IMR-90 (cell line): ENCODE measurements at regions of chr2 and their contacts with region 1.

Region 1: DNA sequence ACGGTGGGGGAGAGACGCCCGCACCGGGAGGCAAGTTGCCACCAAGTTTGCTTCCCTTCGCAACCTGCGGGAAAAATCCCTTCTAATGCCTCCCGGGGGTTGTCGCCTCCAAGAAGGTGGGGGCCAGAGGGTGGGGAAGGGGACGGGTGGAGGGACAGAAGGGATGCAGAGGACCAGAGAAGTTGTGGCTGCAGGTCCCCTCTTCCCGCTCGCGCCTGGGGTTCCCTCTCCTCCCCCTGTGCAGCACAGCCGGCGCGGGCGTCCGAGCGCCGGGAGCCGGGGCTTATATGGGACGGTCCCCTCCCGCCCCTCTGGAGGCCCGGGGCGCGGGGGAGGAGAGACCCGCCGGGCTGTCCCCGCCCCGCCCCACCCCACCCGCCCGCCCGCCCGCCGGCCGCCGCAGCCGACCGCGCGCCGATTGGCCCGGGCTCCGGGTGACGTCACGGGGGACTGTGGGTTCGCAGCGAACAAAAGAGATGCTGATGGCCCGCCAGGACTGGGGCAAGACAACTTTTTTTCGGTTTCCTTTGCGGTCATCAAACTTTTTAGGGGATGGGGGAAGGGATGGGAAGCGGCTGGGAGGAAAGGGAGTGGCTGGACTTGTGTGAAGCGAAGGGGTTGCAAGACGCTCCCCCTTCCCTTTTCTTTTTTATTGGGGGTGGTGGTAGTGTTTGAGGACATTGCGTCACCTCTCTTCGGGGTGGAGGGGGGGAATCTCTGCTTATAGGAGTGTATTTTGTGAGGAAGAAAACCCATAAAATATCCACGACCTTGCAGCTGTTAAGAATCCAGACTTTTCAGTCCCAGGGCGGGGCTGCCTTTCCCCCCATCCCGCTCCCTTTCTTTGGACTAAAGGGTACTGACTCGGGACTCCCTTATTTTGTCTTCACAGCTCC is at the start of gene FN1:
- DNase-seq: peak; percentile 98
- ATAC-seq: peak; percentile 82
- H3K4me3 ChIP-seq: peak within 1 kb of the TSS; percentile 65
- H3K27ac ChIP-seq: peak within 1 kb of the TSS; percentile 94
- H3K4me1 ChIP-seq: peaks cover 8% of the 10 kb centered on the region
- H3K27me3 ChIP-seq: no peaks in the 10 kb centered on the region
- CTCF ChIP-seq: no peak
- POLR2A ChIP-seq: peak; percentile 99
- RAD21 ChIP-seq: peak; percentile 11
- total RNA-seq, gene FN1: 7,693 and 8,243 TPM in 2 replicates

Region 2: DNA sequence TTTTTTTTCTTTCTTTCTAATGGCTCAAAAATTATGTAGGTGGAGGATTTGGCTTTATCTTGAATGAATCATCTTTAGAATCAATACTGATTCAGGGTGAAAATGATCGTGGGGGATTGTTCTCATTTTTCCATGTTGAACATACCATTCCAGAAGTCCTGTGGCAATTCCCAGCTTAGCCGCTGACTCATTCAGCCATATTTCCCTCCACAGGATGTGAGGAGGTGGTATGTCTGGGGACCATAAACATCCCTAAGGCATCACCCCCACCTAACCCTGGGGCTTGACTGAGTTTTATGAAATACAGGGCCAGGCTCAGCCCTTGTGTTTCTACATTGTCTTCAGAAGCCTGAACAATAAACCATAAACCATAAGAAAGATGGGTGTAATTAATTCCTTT is 92.5 kb after region 1 on chr2:
- CTCF ChIA-PET with region 1: no interaction called
- POLR2A ChIA-PET with region 1: interaction called, 3 read pairs
- dilution Hi-C with region 1: no loop called
- in situ Hi-C with region 1: no loop called
- intact Hi-C with region 1: loop called (anchors 1 kb)
- DNase-seq: peak; percentile 99
- ATAC-seq: peak; percentile 70
- H3K4me3 ChIP-seq: no peak overlapping the region
- H3K27ac ChIP-seq: peak overlapping the region; percentile 94; the same call in 1 of the 2 replicates
- H3K4me1 ChIP-seq: peaks cover 17% of the 10 kb centered on the region
- H3K27me3 ChIP-seq: no peaks in the 10 kb centered on the region
- CTCF ChIP-seq: no peak
- POLR2A ChIP-seq: no peak
- RAD21 ChIP-seq: peak; percentile 50

Region 3: DNA sequence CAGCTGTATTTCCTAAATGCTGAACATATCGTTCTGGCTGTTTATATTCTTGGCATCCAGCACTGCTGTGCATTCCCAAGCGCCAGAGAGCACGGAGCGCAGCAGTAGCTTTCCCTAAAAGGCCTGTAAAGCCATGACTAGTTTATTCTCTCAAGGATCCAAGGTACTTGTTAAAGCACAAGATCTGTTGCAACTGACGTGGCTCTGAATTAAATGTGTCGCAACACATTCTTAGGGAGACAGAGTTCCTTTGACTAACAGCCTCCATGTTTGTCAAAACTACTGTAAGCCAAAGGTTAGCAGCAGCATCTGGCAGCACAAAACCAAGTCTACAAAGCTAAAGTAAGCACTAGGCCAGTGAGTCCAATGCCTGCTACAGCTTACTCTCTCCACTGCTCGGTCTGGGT is 188.4 kb after region 1 on chr2:
- CTCF ChIA-PET with region 1: interaction called, 3 read pairs
- POLR2A ChIA-PET with region 1: no interaction called
- dilution Hi-C with region 1: no loop called
- in situ Hi-C with region 1: no loop called
- intact Hi-C with region 1: loop called (anchors 1 kb)
- DNase-seq: peak; percentile 100
- ATAC-seq: peak; percentile 95
- H3K4me3 ChIP-seq: no peak overlapping the region
- H3K27ac ChIP-seq: peak overlapping the region; percentile 92; the same call in 1 of the 2 replicates
- H3K4me1 ChIP-seq: peaks cover 11% of the 10 kb centered on the region
- H3K27me3 ChIP-seq: no peaks in the 10 kb centered on the region
- CTCF ChIP-seq: no peak
- POLR2A ChIP-seq: 0 out of 2 replicates have a peak, but pooled peaks have one; percentile 10
- RAD21 ChIP-seq: peak; percentile 30

Region 4: DNA sequence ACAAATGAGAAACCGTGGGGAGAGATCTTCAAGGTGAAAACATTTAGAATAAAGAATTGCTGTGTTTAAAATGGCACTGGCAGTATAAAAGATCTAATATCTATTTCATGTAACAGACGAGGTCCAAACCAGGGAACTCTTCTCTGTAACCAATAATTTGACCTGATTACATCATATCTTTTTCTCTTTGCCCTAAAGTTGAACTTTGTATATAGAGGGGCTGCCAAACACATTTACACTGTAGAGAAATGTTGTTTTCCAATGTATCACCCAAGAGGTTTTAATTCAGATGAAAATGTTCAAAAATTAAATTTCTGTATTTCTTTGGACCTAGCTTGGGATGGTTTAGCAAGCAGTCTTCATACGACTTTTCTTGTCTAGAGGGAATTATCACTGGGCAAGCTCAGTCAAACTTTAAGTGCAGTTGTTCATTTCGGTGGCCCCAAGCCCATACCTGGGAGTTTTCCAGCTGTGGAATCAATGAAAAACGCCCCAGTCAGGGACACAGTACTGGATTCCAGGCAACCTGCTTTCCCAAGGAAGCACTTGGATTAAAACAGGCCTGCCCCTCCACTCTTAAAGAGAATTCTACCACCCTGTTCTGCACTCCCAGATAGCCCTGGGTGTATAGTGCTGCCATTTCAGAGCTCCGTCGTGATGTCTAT is 208.3 kb after region 1 on chr2:
- CTCF ChIA-PET with region 1: no interaction called
- POLR2A ChIA-PET with region 1: no interaction called
- dilution Hi-C with region 1: no loop called
- in situ Hi-C with region 1: no loop called
- intact Hi-C with region 1: no loop called
- DNase-seq: no peak
- ATAC-seq: no peak
- H3K4me3 ChIP-seq: no peak overlapping the region
- H3K27ac ChIP-seq: no peak overlapping the region
- H3K4me1 ChIP-seq: no peaks in the 10 kb centered on the region
- H3K27me3 ChIP-seq: no peaks in the 10 kb centered on the region
- CTCF ChIP-seq: no peak
- POLR2A ChIP-seq: no peak
- RAD21 ChIP-seq: no peak

Region 5: GRCh38 chr2:215693193-215693998 is 257.3 kb after region 1 on chr2:
- CTCF ChIA-PET with region 1: no interaction called
- POLR2A ChIA-PET with region 1: no interaction called
- dilution Hi-C with region 1: no loop called
- in situ Hi-C with region 1: no loop called
- intact Hi-C with region 1: loop called (anchors 1 kb)
- DNase-seq: peak; percentile 89
- ATAC-seq: peak; percentile 74
- H3K4me3 ChIP-seq: no peak overlapping the region
- H3K27ac ChIP-seq: peak overlapping the region; percentile 76
- H3K4me1 ChIP-seq: peaks cover 14% of the 10 kb centered on the region
- H3K27me3 ChIP-seq: no peaks in the 10 kb centered on the region
- CTCF ChIP-seq: no peak
- POLR2A ChIP-seq: no peak
- RAD21 ChIP-seq: no peak

Region 6: GRCh38 chr2:215784371-215784783 is 348.3 kb after region 1 on chr2:
- CTCF ChIA-PET with region 1: no interaction called
- POLR2A ChIA-PET with region 1: interaction called, 3 read pairs
- dilution Hi-C with region 1: no loop called
- in situ Hi-C with region 1: no loop called
- intact Hi-C with region 1: loop called (anchors 5 kb)
- DNase-seq: peak; percentile 90
- ATAC-seq: peak; percentile 87
- H3K4me3 ChIP-seq: no peak overlapping the region
- H3K27ac ChIP-seq: peak overlapping the region; percentile 95
- H3K4me1 ChIP-seq: peaks cover 9% of the 10 kb centered on the region
- H3K27me3 ChIP-seq: no peaks in the 10 kb centered on the region
- CTCF ChIP-seq: no peak
- POLR2A ChIP-seq: no peak
- RAD21 ChIP-seq: no peak

Region 7: GRCh38 chr2:215920244-215921100 is 484.4 kb after region 1 on chr2:
- CTCF ChIA-PET with region 1: interaction called, 5 read pairs
- POLR2A ChIA-PET with region 1: no interaction called
- dilution Hi-C with region 1: no loop called
- in situ Hi-C with region 1: loop called (anchors 10 kb)
- intact Hi-C with region 1: loop called (anchors 1 kb)
- DNase-seq: peak; percentile 87
- ATAC-seq: peak; percentile 92
- H3K4me3 ChIP-seq: no peak overlapping the region
- H3K27ac ChIP-seq: no peak overlapping the region
- H3K4me1 ChIP-seq: peaks cover 12% of the 10 kb centered on the region
- H3K27me3 ChIP-seq: no peaks in the 10 kb centered on the region
- CTCF ChIP-seq: peak; percentile 95
- POLR2A ChIP-seq: peak; percentile 40; the same call in 1 of the 2 replicates
- RAD21 ChIP-seq: peak; percentile 98

Region 8: DNA sequence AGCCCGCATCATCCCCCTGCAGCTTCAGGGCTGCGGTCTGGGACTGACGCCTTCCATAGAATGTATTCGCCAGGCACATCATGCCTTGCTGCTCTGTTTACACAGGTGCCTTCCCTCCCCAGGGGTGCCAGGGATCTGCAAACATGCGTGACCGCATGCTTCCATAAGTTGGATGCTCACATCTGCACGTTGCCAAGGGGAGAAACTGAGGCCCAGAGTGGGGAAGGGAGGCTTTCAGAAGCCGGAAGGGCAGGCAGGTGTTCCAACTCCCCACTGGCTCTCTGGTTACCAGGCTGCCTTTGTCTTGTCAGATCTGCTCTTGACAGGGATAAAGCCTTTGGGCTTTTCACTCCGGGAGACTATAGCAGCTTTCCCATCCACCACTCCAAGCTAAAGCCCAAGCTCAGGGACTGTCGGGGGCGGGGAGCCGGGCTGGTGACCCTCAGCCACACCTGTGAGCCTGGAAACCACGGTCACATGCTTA is 1549.6 kb after region 1 on chr2:
- CTCF ChIA-PET with region 1: no interaction called
- POLR2A ChIA-PET with region 1: no interaction called
- dilution Hi-C with region 1: no loop called
- in situ Hi-C with region 1: no loop called
- intact Hi-C with region 1: no loop called
- DNase-seq: no peak
- ATAC-seq: no peak
- H3K4me3 ChIP-seq: no peak overlapping the region
- H3K27ac ChIP-seq: no peak overlapping the region
- H3K4me1 ChIP-seq: peaks cover 3% of the 10 kb centered on the region
- H3K27me3 ChIP-seq: no peaks in the 10 kb centered on the region
- CTCF ChIP-seq: no peak
- POLR2A ChIP-seq: no peak
- RAD21 ChIP-seq: no peak